Ovary (tissue), 10 donors: ENCODE measurements at regions of chr6 and their contacts with region 1.

Region 1: DNA sequence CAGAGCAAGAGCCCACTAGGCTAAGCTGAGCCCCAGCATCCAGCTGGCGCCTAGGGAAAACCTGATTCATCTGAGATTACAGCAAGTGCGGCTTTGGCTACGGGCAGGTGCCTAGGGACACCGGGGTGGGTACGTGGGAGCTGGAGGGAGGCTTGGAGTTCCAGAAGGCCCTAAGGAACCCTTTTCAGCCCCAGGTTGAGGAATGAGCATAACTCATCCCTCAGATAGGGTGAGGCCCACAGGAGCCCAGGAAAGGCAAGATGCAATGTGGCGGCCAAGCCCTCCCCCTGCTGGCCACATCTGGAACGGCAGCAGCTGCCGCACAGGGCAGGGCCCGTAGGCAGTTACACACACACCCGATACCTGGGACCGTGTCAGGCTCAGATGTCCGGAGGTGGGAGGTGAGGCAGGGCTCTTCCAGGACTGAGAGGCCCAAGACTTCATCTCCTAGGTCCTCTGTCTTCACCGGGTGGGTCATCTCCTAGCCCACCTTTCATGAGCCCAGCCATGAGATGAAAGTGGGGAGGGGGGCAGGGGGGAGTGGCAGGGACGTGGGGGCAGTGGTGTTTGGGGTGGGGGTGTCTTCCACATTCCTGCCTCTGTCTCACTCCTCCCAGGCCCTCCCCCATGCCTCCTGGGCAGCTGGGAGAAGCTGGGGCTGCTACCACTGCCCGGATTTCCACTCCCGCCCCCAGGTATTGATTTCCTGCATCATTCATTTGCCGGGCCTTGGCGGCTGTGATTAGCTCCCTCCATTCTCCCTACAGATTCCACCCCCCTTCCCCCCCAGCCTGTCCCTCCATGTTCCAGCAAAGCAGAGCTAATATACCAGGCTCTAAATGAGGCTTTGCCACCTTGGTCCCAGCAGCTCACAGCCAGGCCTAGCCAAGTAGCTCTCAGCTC is 5.5 kb downstream of the MDGA1 start:
- DNase-seq: peak; percentile 54 to 84 (median 76)
- H3K4me3 ChIP-seq: no peak overlapping the region
- H3K27ac ChIP-seq: no peak overlapping the region
- H3K4me1 ChIP-seq: peaks cover 5% of the 10 kb centered on the region
- H3K27me3 ChIP-seq: no peaks in the 10 kb centered on the region
- CTCF ChIP-seq: peak; percentile 84 to 90 (median 85)
- EP300 ChIP-seq: no peak
- POLR2A ChIP-seq: no peak

Region 2: DNA sequence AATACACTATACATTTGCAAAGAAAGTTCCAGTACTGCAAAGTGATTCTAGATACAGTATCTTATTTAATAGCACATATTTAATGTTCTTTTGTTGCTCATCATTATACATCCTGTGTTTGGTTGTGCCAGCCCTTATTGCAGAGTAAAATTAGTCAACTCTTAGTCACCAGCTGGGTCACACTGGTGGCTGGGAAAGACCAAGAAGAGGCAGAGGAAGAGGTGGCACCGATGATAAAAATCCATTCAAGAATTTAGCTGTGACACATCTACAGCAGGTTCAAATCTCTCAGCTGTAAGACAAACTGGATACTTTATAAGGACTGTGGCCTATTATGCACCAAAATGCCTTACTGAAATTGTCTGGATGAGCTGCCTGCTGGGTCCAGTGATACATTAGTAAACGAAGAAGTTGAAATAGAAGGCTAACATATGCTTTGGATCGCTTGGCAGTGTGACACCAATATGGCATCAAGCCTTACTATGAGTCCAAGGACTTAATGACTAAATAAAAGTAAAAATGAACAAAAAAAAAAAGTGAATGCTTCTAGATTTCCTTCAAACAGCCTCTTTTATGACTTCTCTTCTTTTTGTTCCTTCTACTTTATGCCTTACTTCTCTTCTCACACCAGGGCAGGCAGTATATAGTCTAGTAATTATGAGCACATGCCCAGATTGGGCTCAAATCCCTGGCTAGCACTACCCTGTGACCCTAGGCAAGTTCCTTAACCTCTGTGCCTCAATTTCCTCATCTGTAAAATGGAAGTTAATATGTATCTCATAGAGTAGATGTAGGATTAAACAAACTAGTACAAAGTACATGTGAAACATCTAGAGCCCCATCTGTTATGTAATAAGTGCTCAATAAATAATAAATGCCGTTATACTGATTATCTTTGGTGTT is 367.8 kb before region 1 on chr6:
- intact Hi-C with region 1: loop called in 1 of 4 experiments (anchors 10 kb)
- DNase-seq: no peak
- H3K4me3 ChIP-seq: no peak overlapping the region
- H3K27ac ChIP-seq: no peak overlapping the region
- H3K4me1 ChIP-seq: no peaks in the 10 kb centered on the region
- H3K27me3 ChIP-seq: no peaks in the 10 kb centered on the region
- CTCF ChIP-seq: no peak
- EP300 ChIP-seq: no peak
- POLR2A ChIP-seq: no peak

Region 3: DNA sequence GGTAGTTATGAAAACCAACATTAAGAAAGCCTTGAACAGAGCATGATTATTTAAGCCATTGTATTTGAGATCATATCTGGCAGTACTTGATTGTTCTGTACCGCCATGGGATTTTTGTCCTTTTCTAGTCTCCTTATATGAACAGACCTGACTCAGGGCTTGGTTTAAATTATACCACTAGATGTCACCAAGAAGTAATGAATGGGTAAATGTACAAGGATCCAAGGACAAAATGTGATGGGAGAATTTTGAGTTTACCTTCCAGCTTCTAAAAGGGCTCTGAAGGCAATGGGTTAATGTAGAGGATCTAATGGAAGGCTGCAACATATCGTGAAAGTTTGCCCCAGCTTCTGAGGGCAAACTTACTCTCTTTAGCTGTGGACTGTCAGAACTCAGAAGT is 326.4 kb before region 1 on chr6:
- intact Hi-C with region 1: loop called in 2 of 4 experiments (anchors 10 kb)
- DNase-seq: no peak
- H3K4me3 ChIP-seq: no peak overlapping the region
- H3K27ac ChIP-seq: no peak overlapping the region
- H3K4me1 ChIP-seq: no peaks in the 10 kb centered on the region
- H3K27me3 ChIP-seq: no peaks in the 10 kb centered on the region
- CTCF ChIP-seq: peak in 1 of 3 donors; percentile 11
- EP300 ChIP-seq: no peak
- POLR2A ChIP-seq: no peak

Region 4: DNA sequence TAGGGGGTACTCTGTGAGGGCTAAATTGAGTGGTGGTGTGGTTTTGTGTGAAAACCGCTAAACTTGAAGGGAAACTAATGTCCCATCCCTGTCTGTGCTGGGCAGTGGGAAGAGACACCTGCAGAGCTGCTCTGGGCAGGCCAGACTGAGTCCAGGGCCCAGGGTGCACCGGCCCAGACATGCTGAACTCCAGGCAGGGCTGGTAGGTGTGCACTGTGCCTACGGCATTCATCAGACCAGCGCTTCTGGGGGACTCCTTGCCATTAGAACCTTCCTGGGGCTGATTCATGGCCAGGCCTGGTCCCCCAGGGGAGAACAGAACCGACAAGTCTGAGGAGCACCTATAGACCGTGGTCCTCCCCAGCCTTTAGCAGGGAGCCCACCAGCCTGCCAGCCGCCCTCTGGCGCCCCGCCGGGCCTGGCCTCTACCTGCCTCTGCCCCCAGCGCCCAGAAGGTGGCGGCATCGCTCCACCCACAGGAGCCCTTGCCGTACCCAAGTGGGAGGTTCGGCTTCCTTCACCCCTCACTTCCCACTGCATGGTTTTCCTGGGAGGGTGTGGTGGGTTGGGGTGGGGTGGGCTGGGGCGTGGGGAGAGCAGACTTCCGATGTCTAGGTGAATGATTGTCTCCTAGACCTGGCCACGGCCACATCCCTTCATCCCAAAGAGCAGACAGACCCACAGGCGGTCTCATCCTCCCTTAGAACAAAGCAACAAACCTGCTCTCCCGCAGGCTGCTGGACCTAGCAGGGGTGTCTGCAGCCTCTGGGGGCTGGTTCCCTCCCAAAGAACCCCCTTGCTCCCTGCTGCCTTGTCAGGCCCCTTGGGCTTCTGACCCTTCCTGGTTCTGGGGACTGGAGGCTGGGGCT is 208.0 kb before region 1 on chr6:
- intact Hi-C with region 1: loop called in 1 of 4 experiments (anchors 10 kb)
- DNase-seq: peak; percentile 48 to 80 (median 70)
- H3K4me3 ChIP-seq: no peak overlapping the region
- H3K27ac ChIP-seq: no peak overlapping the region
- H3K4me1 ChIP-seq: no peaks in the 10 kb centered on the region
- H3K27me3 ChIP-seq: no peaks in the 10 kb centered on the region
- CTCF ChIP-seq: peak; percentile 34 to 54 (median 52)
- EP300 ChIP-seq: no peak
- POLR2A ChIP-seq: no peak

Region 5: DNA sequence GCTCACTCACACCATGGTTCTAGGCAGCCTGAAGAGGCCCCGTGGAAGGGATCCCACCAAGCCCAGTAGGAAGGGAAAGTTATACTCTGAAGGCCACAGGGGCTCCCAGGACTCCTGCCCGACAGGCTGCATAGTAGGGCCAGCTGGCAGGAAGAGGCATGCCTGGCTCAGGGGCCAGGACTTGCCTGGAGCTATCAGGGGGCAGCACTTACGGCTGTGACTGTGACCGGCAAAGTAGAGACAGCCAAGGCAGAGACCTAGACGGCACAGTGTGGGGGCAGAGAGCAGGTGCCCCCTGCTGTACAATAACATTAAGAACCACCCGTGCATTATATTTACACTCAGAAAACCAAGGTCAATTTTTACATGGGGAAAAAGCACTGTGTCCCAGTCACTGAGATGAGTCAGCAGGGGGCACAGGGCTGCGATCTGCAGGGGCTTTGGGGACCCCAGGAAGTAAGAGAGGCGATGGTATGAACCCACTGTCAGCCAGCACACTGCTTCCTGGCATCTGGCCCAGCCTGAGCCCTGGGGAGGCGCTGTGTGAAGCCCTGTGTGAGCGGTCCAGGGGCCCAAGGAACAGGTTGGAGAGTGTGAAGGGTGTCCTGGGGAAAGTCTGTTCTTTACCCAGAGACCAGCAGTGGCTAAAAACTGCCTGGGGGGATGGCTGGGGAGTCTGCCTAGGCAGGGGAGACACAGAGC is 202.3 kb before region 1 on chr6:
- intact Hi-C with region 1: loop called in 2 of 4 experiments (anchors 5 to 10 kb)
- DNase-seq: peak in 2 of 5 donors; percentile 23 to 51
- H3K4me3 ChIP-seq: no peak overlapping the region
- H3K27ac ChIP-seq: no peak overlapping the region
- H3K4me1 ChIP-seq: peaks cover 5% of the 10 kb centered on the region
- H3K27me3 ChIP-seq: no peaks in the 10 kb centered on the region
- CTCF ChIP-seq: no peak
- EP300 ChIP-seq: no peak
- POLR2A ChIP-seq: no peak

Region 6: GRCh38 chr6:38483526-38483925 is 791.4 kb after region 1 on chr6:
- intact Hi-C with region 1: loop called in 1 of 4 experiments (anchors 10 kb)
- DNase-seq: no peak
- H3K4me3 ChIP-seq: no peak overlapping the region
- H3K27ac ChIP-seq: no peak overlapping the region
- H3K4me1 ChIP-seq: no peaks in the 10 kb centered on the region
- H3K27me3 ChIP-seq: no peaks in the 10 kb centered on the region
- CTCF ChIP-seq: no peak
- EP300 ChIP-seq: no peak
- POLR2A ChIP-seq: no peak